Activated CD8-positive, alpha-beta T cell treated with anti-CD3 and anti-CD28 coated beads for 36 hours (primary cell): ENCODE measurements at regions of chr6 and their contacts with region 1.

Region 1: GRCh38 chr6:36027501-36028087 is at the start of gene MAPK14:
- DNase-seq: peak; percentile 100
- ATAC-seq: peak; percentile 92
- H3K4me3 Mint-ChIP-seq: peak within 1 kb of the TSS; percentile 87
- H3K27ac Mint-ChIP-seq: peak within 1 kb of the TSS; percentile 97
- H3K4me1 Mint-ChIP-seq: peaks cover 29% of the 10 kb centered on the region
- H3K27me3 Mint-ChIP-seq: peaks cover 22% of the 10 kb centered on the region
- CTCF ChIP-seq: peak; percentile 89
- total RNA-seq, gene MAPK14: 45.7 to 49.8 TPM

Region 2: GRCh38 chr6:35920793-35921732 is 106.5 kb before region 1 on chr6 and contains the start of gene SRPK1:
- CTCF ChIA-PET with region 1: interaction called, 3 read pairs
- POLR2A ChIA-PET with region 1: interaction called, 10 read pairs
- intact Hi-C with region 1: no loop called
- DNase-seq: peak; percentile 90
- ATAC-seq: peak; percentile 87
- H3K4me3 Mint-ChIP-seq: peak within 1 kb of the TSS; percentile 92
- H3K27ac Mint-ChIP-seq: peak within 1 kb of the TSS; percentile 97
- H3K4me1 Mint-ChIP-seq: peaks cover 40% of the 10 kb centered on the region
- H3K27me3 Mint-ChIP-seq: no peaks in the 10 kb centered on the region
- CTCF ChIP-seq: no peak
- total RNA-seq, gene SRPK1: 117 to 133 TPM

Region 3: GRCh38 chr6:36075656-36076055 is 48.1 kb after region 1 on chr6:
- CTCF ChIA-PET with region 1: interaction called, 11 read pairs
- POLR2A ChIA-PET with region 1: interaction called, 5 read pairs
- intact Hi-C with region 1: no loop called
- DNase-seq: peak; percentile 14
- ATAC-seq: peak; percentile 42
- H3K4me3 Mint-ChIP-seq: no peak overlapping the region
- H3K27ac Mint-ChIP-seq: no peak overlapping the region
- H3K4me1 Mint-ChIP-seq: peaks cover 21% of the 10 kb centered on the region
- H3K27me3 Mint-ChIP-seq: no peaks in the 10 kb centered on the region
- CTCF ChIP-seq: no peak

Region 4: DNA sequence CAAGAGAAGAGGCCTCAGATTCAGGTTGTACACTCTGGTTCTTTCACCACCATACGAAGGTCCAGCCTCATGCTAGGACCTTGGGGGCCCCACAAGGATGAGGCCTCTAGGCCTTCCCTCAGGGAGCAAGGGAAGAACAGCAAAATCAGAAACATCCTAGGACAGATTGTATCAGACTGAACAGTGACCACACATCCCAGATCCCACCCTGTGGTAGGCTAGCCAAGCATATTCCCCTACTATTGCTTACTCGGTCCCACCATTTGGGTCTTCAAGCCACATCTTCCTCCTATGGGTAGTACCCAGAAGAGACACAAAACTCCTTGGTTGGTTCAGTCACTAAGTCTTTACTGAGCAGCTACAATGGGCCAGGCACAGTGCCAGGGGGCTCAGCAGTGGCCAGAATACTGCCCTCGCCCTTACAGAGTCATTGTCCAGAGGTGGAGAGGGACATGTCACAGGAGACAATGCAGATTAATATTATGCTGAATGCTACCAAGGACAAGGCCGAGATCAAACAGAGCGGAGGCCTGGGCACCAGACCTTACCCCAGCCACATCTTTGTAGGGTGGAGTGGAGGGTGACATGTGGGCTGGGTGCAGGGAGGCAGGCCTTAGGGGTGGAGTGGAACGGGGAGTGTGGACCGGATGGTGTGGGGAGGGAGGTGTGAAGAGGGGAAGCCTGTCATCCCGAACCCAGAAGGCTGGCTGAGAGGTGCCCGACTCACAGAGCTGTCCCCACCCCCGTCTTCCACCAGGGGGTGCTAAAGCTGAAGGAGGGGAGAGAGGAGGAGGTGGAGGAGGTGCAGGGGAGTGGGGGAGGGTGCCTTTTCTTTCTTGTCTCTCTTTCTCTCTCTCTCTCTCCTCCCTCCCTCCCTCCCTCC is 95.9 kb after region 1 on chr6:
- CTCF ChIA-PET with region 1: interaction called, 19 read pairs
- POLR2A ChIA-PET with region 1: interaction called, 23 read pairs
- intact Hi-C with region 1: no loop called
- DNase-seq: peak; percentile 95
- ATAC-seq: peak; percentile 85
- H3K4me3 Mint-ChIP-seq: no peak overlapping the region
- H3K27ac Mint-ChIP-seq: peak overlapping the region; percentile 71
- H3K4me1 Mint-ChIP-seq: peaks cover 84% of the 10 kb centered on the region
- H3K27me3 Mint-ChIP-seq: no peaks in the 10 kb centered on the region
- CTCF ChIP-seq: peak; percentile 41

Region 5: GRCh38 chr6:36196880-36197548 is 169.4 kb after region 1 on chr6:
- CTCF ChIA-PET with region 1: interaction called, 6 read pairs
- POLR2A ChIA-PET with region 1: interaction called, 7 read pairs
- intact Hi-C with region 1: loop called (anchors 5 kb)
- DNase-seq: peak; percentile 100
- ATAC-seq: peak; percentile 96
- H3K4me3 Mint-ChIP-seq: peak overlapping the region; percentile 87
- H3K27ac Mint-ChIP-seq: peak overlapping the region; percentile 94
- H3K4me1 Mint-ChIP-seq: peaks cover 56% of the 10 kb centered on the region
- H3K27me3 Mint-ChIP-seq: no peaks in the 10 kb centered on the region
- CTCF ChIP-seq: no peak

Region 6: DNA sequence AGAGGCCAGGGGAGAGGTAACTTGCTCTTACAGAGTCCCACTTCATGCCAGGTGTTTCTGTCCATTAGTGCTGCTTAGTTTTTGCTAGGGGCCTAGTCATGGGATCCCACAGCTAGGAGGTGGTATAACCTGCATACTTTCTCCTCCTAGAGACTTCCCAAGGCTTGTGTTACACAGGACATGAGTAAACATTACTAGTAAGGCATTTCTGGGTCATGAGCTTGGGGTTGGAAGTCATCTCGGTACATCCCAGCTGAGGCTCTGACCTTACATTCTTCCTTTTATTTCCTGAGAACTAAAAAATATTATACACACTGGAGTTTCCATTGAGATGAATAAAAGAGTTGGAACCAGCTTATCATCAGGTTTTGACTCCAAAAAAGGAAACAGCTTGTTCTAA is 221.4 kb after region 1 on chr6:
- CTCF ChIA-PET with region 1: no interaction called
- POLR2A ChIA-PET with region 1: no interaction called
- intact Hi-C with region 1: no loop called
- DNase-seq: no peak
- ATAC-seq: no peak
- H3K4me3 Mint-ChIP-seq: no peak overlapping the region
- H3K27ac Mint-ChIP-seq: no peak overlapping the region
- H3K4me1 Mint-ChIP-seq: no peaks in the 10 kb centered on the region
- H3K27me3 Mint-ChIP-seq: no peaks in the 10 kb centered on the region
- CTCF ChIP-seq: no peak

Region 7: DNA sequence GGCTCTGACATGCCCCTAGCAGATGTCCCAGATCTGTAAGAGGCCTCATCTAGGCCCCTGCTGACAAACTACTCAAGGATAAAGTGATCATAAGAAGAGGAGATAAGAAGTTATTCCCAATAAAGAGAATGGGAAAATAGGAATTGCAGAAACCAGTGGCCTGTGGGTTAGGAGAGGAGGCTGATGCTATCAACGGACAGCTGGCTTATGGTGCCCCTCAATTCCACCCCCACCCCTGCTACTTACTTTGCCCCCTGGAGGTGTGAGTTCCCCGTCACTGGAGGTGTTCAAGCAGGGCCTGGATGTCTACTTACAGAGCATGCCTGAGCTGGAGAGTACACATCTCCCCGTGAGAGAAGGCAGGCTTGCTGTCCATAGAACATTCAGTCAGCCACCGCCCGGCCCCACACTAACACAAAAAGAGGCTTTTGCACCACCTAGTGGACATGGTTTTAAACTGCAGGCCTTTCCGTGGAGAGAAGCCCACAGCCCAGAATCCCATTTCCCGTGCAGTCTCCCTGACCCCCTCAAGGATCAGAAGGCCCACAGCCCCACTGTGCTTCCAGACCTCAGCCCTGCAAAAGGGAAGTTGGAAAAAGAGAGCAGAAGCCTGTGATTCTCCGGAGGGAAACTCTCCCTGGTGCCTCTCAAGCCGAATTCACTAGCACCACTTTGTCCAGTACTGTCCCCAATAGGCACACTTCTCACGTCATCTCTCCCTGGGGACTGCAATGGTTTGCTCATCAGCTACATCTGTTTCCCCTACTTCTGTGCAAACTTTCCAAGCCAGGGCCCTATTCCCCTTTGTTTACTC is 332.9 kb after region 1 on chr6:
- CTCF ChIA-PET with region 1: interaction called, 17 read pairs
- POLR2A ChIA-PET with region 1: no interaction called
- intact Hi-C with region 1: no loop called
- DNase-seq: peak; percentile 84
- ATAC-seq: peak; percentile 93
- H3K4me3 Mint-ChIP-seq: no peak overlapping the region
- H3K27ac Mint-ChIP-seq: no peak overlapping the region
- H3K4me1 Mint-ChIP-seq: peaks cover 12% of the 10 kb centered on the region
- H3K27me3 Mint-ChIP-seq: no peaks in the 10 kb centered on the region
- CTCF ChIP-seq: peak; percentile 79